Mammary epithelial cell (primary cell): ENCODE measurements at regions of chr9 and their contacts with region 1.

Region 1: GRCh38 chr9:106862825-106863720 is at the start of gene ZNF462:
- DNase-seq: peak; percentile 76
- H3K4me3 ChIP-seq: peak within 1 kb of the TSS; percentile 86 to 99 (median 91)
- H3K27ac ChIP-seq: peak within 1 kb of the TSS; percentile 84
- H3K4me1 ChIP-seq: peaks cover 23% of the 10 kb centered on the region
- H3K27me3 ChIP-seq: no peaks in the 10 kb centered on the region
- CTCF ChIP-seq: peak; percentile 14 to 50
- total RNA-seq, gene ZNF462: 28.0 to 43.9 TPM

Region 2: GRCh38 chr9:105842023-105842644 is 1020.9 kb before region 1 on chr9:
- CTCF ChIA-PET with region 1: no interaction called
- dilution Hi-C with region 1: no loop called
- in situ Hi-C with region 1: no loop called
- intact Hi-C with region 1: loop called (anchors 5 kb)
- DNase-seq: peak; percentile 27
- H3K4me3 ChIP-seq: no peak overlapping the region
- H3K27ac ChIP-seq: no peak overlapping the region
- H3K4me1 ChIP-seq: no peaks in the 10 kb centered on the region
- H3K27me3 ChIP-seq: peaks cover 4% of the 10 kb centered on the region
- CTCF ChIP-seq: peak; percentile 88 to 90

Region 3: DNA sequence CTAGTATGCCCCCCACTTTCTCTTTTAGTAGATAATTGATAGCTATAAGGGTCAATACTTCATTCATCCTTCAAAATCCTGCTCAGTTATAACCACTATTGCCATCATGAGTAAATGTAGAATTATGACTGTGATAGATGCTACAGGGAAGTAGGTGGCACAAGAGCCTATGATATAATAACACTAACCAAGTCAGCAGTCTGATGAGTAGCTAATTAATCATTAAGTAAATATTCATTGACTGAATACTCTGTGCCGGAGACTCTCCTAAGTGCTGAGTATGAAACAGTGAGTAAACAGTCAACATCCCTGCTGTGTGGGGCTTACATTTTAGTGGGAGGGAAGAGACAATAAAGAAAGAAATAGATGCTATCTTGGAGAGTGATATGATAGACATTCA is 430.4 kb before region 1 on chr9:
- CTCF ChIA-PET with region 1: no interaction called
- dilution Hi-C with region 1: no loop called
- in situ Hi-C with region 1: loop called in 1 of 2 experiments (anchors 25 kb)
- intact Hi-C with region 1: loop called (anchors 1 kb)
- DNase-seq: peak; percentile 63
- H3K4me3 ChIP-seq: no peak overlapping the region
- H3K27ac ChIP-seq: no peak overlapping the region
- H3K4me1 ChIP-seq: peaks cover 6% of the 10 kb centered on the region
- H3K27me3 ChIP-seq: no peaks in the 10 kb centered on the region
- CTCF ChIP-seq: peak; percentile 21 to 37

Region 4: DNA sequence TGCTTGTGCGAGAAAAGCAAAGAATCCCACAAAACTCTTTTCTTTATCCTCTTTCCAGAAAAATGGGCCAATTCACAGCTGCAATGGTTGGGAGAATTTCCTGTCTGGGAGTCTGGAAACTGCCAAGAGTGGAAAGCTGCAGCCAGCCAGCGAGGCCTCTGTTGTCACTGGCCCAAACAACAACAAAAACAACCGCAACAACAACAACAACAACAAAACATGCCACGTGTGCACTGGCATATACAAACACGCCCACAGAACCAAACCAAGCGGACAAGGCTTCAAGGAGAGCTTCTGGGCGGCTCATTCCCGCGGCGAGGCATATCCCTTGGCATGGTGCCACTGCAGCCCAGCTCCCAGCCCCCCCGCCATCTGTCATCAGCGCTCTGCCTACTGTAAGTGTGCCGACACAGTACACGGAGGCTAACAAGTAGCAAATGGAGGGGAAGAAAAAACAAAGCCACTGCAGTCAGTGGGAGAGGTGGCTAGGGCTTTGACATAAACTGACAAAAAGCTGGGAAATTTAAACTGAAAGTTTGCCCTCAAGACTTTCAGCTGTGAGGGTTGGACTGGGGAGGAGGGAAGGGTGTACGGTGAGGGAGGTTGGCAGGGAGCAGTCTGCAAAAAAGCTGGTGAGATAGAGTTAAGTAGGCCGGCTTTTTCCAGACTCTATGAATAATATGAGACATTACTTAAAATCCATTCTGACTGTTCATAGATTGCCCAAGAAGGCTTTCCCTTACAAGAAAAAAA is 165.1 kb before region 1 on chr9:
- CTCF ChIA-PET with region 1: no interaction called
- dilution Hi-C with region 1: no loop called
- in situ Hi-C with region 1: no loop called
- intact Hi-C with region 1: loop called (anchors 2 kb)
- DNase-seq: peak; percentile 62
- H3K4me3 ChIP-seq: peak overlapping the region; percentile 17 to 38 (median 36)
- H3K27ac ChIP-seq: no peak overlapping the region
- H3K4me1 ChIP-seq: peaks cover 12% of the 10 kb centered on the region
- H3K27me3 ChIP-seq: no peaks in the 10 kb centered on the region
- CTCF ChIP-seq: no peak

Region 5: DNA sequence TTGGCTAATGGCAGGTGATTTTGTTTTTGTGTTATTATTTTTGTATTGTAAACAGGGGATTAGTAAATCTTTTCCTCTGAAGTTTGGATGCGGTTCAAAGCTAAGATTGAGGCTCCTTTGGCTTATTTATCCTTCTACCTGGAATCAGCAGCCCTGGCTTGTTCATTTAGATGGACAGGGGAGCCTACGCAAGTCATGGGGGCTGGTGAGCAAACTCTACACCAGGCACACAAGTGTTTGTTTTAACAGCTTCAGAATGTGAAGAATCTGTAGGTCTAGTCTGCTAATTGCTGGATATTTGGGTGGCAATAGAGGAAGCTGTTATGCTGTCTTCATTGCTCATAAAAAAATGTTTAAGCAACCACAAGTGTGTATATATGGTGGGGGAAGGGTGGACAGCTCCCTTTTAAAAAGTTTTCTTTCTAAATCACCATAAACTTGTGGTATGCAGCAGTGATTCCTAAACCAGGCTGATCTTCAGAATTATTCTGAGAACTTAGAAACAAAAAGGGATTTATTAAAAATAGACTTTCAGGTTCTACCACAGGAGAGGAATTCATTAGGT is 20.6 kb after region 1 on chr9:
- CTCF ChIA-PET with region 1: interaction called, 6 read pairs
- dilution Hi-C with region 1: no loop called
- in situ Hi-C with region 1: no loop called
- intact Hi-C with region 1: loop called (anchors 2 kb)
- DNase-seq: no peak
- H3K4me3 ChIP-seq: no peak overlapping the region
- H3K27ac ChIP-seq: no peak overlapping the region
- H3K4me1 ChIP-seq: peaks cover 83% of the 10 kb centered on the region
- H3K27me3 ChIP-seq: no peaks in the 10 kb centered on the region
- CTCF ChIP-seq: no peak

Region 6: DNA sequence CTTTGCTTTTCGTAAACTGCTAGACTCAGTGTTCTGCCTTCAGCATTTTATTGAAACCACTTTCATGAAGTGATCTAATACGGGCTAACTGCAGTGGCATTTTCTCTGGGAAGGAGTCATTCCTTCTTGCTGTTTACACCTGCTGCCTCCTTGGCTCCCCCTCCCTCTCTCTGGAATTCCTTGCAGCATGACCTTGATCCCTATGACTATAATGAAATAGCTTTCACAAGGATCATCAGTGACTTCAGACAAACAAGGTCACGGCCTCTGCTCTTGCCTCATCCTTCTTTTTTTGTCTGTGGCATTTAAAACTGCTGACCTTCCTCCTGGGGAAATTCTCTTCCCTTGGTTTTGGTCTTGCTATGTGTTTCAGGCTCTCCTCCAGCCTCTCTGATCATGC is 90.1 kb after region 1 on chr9:
- CTCF ChIA-PET with region 1: no interaction called
- dilution Hi-C with region 1: no loop called
- in situ Hi-C with region 1: loop called in 1 of 2 experiments (anchors 10 kb)
- intact Hi-C with region 1: loop called (anchors 5 kb)
- DNase-seq: no peak
- H3K4me3 ChIP-seq: no peak overlapping the region
- H3K27ac ChIP-seq: no peak overlapping the region
- H3K4me1 ChIP-seq: peaks cover 15% of the 10 kb centered on the region
- H3K27me3 ChIP-seq: no peaks in the 10 kb centered on the region
- CTCF ChIP-seq: no peak

Region 7: GRCh38 chr9:107000218-107000617 is 137.1 kb after region 1 on chr9:
- CTCF ChIA-PET with region 1: no interaction called
- dilution Hi-C with region 1: no loop called
- in situ Hi-C with region 1: no loop called
- intact Hi-C with region 1: no loop called
- DNase-seq: peak; percentile 14
- H3K4me3 ChIP-seq: no peak overlapping the region
- H3K27ac ChIP-seq: no peak overlapping the region
- H3K4me1 ChIP-seq: peaks cover 7% of the 10 kb centered on the region
- H3K27me3 ChIP-seq: no peaks in the 10 kb centered on the region
- CTCF ChIP-seq: no peak

Region 8: DNA sequence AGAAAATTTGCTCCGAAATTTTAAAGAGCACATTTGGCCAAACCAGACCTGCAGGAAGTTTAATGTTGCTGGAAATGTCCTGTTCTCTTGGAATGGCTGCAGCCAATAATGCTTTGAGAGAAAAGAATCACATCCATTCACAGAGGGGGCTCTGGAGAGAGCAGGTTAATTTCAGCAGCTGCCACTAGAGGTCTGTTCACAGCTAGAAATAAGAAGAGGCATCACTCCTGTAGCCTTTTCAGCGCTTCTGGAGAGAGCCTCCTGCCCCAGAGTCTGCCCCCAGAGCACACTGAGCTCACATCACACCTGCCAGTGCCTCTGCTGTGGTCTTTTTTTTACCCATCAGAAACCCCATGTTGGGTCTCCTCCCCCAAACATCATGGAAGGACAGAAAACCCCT is 295.2 kb after region 1 on chr9:
- CTCF ChIA-PET with region 1: no interaction called
- dilution Hi-C with region 1: no loop called
- in situ Hi-C with region 1: no loop called
- intact Hi-C with region 1: loop called (anchors 5 kb)
- DNase-seq: peak; percentile 16
- H3K4me3 ChIP-seq: no peak overlapping the region
- H3K27ac ChIP-seq: no peak overlapping the region
- H3K4me1 ChIP-seq: no peaks in the 10 kb centered on the region
- H3K27me3 ChIP-seq: no peaks in the 10 kb centered on the region
- CTCF ChIP-seq: peak; percentile 24 to 46